Activated CD8-positive, alpha-beta T cell treated with anti-CD3 and anti-CD28 coated beads for 36 hours (primary cell): ENCODE measurements at regions of chr2 and their contacts with region 1.

Region 1: GRCh38 chr2:207529330-207530159 is at the start of gene CREB1:
- DNase-seq: peak; percentile 99
- ATAC-seq: peak; percentile 86
- H3K4me3 Mint-ChIP-seq: peak within 1 kb of the TSS; percentile 97
- H3K27ac Mint-ChIP-seq: peak within 1 kb of the TSS; percentile 99
- H3K4me1 Mint-ChIP-seq: peaks cover 56% of the 10 kb centered on the region
- H3K27me3 Mint-ChIP-seq: no peaks in the 10 kb centered on the region
- CTCF ChIP-seq: no peak
- total RNA-seq, gene CREB1: 92.8 to 95.8 TPM

Region 2: DNA sequence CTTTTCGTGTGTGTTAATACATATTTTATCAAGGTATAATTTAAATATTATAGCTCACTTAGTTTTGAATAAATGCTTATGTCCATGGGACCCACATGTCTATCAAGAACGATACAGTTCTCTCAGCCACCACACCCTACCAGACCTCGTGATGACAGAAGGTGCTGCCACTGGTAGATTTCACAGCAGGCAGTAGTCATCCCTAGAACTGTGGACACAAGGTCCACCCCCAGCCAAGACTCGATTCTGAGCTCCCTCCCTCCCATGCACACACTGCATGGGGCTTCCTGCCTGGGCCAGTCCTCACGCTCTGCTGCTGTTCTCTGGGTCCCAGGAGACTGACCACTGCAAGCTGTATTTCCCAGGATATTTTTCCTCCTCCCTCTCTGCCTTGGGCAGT is 26.3 kb before region 1 on chr2:
- CTCF ChIA-PET with region 1: interaction called, 5 read pairs
- POLR2A ChIA-PET with region 1: interaction called, 25 read pairs
- intact Hi-C with region 1: no loop called
- DNase-seq: peak; percentile 44
- ATAC-seq: peak; percentile 41
- H3K4me3 Mint-ChIP-seq: no peak overlapping the region
- H3K27ac Mint-ChIP-seq: no peak overlapping the region
- H3K4me1 Mint-ChIP-seq: peaks cover 61% of the 10 kb centered on the region
- H3K27me3 Mint-ChIP-seq: no peaks in the 10 kb centered on the region
- CTCF ChIP-seq: no peak

Region 3: GRCh38 chr2:207516206-207516605 is 13.3 kb before region 1 on chr2:
- CTCF ChIA-PET with region 1: interaction called, 12 read pairs
- POLR2A ChIA-PET with region 1: interaction called, 7 read pairs
- intact Hi-C with region 1: no loop called
- DNase-seq: no peak
- ATAC-seq: no peak
- H3K4me3 Mint-ChIP-seq: no peak overlapping the region
- H3K27ac Mint-ChIP-seq: no peak overlapping the region
- H3K4me1 Mint-ChIP-seq: peaks cover 49% of the 10 kb centered on the region
- H3K27me3 Mint-ChIP-seq: no peaks in the 10 kb centered on the region
- CTCF ChIP-seq: no peak

Region 4: DNA sequence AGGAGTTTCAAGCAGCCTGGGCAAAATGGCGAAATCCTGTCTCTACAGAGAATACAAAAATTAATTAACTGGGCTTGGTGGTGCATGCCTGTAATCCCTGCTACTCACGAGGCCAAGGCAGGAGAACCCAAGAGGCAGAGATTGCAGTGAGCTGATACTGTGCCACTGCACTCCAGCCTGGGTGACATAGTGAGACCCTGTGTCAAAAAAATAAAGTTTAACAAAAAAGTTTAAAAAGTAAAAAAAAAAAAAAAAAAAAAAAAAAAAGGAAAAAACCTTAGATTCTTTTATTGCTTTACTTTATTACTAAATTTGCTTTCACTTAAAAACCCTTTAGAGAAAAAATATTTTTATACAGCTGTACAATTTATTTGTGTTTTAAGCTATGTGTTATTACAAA is 10.9 kb after region 1 on chr2:
- CTCF ChIA-PET with region 1: interaction called, 5 read pairs
- POLR2A ChIA-PET with region 1: interaction called, 53 read pairs
- intact Hi-C with region 1: no loop called
- DNase-seq: no peak
- ATAC-seq: no peak
- H3K4me3 Mint-ChIP-seq: no peak overlapping the region
- H3K27ac Mint-ChIP-seq: no peak overlapping the region
- H3K4me1 Mint-ChIP-seq: peaks cover 64% of the 10 kb centered on the region
- H3K27me3 Mint-ChIP-seq: no peaks in the 10 kb centered on the region
- CTCF ChIP-seq: no peak

Region 5: GRCh38 chr2:207546822-207547221 is 17.3 kb after region 1 on chr2:
- CTCF ChIA-PET with region 1: interaction called, 8 read pairs
- POLR2A ChIA-PET with region 1: interaction called, 53 read pairs
- intact Hi-C with region 1: no loop called
- DNase-seq: no peak
- ATAC-seq: no peak
- H3K4me3 Mint-ChIP-seq: no peak overlapping the region
- H3K27ac Mint-ChIP-seq: peak overlapping the region; percentile 65
- H3K4me1 Mint-ChIP-seq: peaks cover 73% of the 10 kb centered on the region
- H3K27me3 Mint-ChIP-seq: no peaks in the 10 kb centered on the region
- CTCF ChIP-seq: no peak

Region 6: DNA sequence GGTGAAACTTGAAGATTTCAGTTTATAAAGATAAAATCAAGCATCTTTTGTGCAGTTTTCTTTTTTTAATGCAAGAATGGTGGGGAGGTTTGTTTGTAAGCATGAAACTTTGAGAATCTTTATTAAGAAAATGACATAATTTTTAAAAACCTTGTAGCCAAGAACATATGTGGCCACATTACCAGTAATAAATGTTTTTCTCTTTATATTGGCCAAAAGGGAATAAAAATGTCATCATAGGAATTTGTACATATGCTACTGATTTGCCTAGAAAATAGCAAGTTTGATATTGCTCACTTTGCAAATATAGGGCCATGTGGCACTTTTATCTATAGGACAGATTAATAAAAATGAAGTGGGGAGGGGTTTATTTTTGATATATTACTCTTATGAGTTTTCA is 70.1 kb after region 1 on chr2:
- CTCF ChIA-PET with region 1: no interaction called
- POLR2A ChIA-PET with region 1: interaction called, 3 read pairs
- intact Hi-C with region 1: loop called (anchors 10 kb)
- DNase-seq: no peak
- ATAC-seq: no peak
- H3K4me3 Mint-ChIP-seq: no peak overlapping the region
- H3K27ac Mint-ChIP-seq: no peak overlapping the region
- H3K4me1 Mint-ChIP-seq: peaks cover 23% of the 10 kb centered on the region
- H3K27me3 Mint-ChIP-seq: no peaks in the 10 kb centered on the region
- CTCF ChIP-seq: no peak

Region 7: DNA sequence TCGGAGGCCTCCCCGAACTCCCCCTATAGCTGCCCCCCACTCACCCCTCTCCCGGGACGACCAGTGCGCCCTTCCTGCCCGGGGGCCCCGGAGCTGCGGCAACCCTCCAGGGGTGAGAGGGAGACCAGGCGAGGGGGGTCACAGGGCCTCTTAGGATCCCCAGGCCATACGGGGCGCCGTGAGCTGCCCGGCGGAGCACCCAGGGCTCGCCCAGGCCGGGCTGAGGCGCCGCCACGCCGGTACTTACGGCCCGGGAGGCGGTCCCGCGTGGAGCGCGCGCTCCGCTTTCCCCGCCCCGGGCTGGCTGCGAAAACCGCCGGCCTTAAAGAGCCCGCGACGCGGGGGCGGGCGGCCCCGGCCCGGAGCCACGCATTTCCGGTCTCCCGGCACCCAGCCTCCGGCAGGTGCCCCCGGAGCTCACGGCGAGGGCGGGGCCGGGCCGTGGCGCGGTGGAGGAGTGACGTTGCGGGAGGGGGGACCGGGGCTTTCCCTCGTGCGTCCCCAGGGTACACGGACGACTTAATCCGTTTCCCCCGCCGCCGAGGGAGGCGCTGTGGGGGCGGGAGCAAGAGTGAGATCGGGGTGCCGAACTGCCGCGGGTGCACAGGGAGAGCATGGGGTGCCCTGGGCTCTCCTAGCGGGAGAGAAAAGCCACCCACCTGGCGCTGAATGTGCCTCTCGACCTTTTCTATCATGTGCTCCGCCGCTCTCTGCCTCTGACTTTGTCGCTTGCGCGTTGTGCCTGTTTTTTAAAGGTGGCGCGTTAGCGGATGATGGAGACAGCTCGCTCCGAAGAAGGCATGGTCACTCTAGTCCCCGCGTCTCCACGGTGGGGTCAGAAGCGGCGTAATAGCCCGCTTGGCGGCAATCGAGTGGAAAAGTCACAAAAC is 95.7 kb after region 1 on chr2 and contains the start of gene METTL21A:
- CTCF ChIA-PET with region 1: interaction called, 13 read pairs
- POLR2A ChIA-PET with region 1: interaction called, 45 read pairs
- intact Hi-C with region 1: loop called (anchors 2 kb)
- DNase-seq: peak; percentile 95
- ATAC-seq: peak; percentile 85
- H3K4me3 Mint-ChIP-seq: peak within 1 kb of the TSS; percentile 96
- H3K27ac Mint-ChIP-seq: peak within 1 kb of the TSS; percentile 97
- H3K4me1 Mint-ChIP-seq: peaks cover 42% of the 10 kb centered on the region
- H3K27me3 Mint-ChIP-seq: no peaks in the 10 kb centered on the region
- CTCF ChIP-seq: no peak
- total RNA-seq, gene METTL21A: 28.9 to 30.7 TPM